Esophagus muscularis mucosa (tissue), 4 donors: ENCODE measurements at regions of chr3 and their contacts with region 1.

Region 1: GRCh38 chr3:51622868-51623267 is 48.2 kb upstream of the TEX264 start:
- DNase-seq: no peak
- H3K4me3 ChIP-seq: no peak overlapping the region
- H3K27ac ChIP-seq: peak overlapping the region; percentile 70 to 78 (median 72)
- H3K4me1 ChIP-seq: peaks cover 31 to 55% (median 54%) of the 10 kb centered on the region in 4 donors
- H3K27me3 ChIP-seq: no peaks in the 10 kb centered on the region
- CTCF ChIP-seq: no peak
- EP300 ChIP-seq: no peak
- POLR2A ChIP-seq: no peak

Region 2: GRCh38 chr3:51538459-51539290 is 84.2 kb before region 1 on chr3 and contains the start of gene RAD54L2:
- intact Hi-C with region 1: loop called (anchors 10 kb)
- DNase-seq: no peak
- H3K4me3 ChIP-seq: peak within 1 kb of the TSS; percentile 78 to 99 (median 97)
- H3K27ac ChIP-seq: peak within 1 kb of the TSS; percentile 89 to 96 (median 94)
- H3K4me1 ChIP-seq: peaks cover 21 to 39% (median 35%) of the 10 kb centered on the region in 4 donors
- H3K27me3 ChIP-seq: no peaks in the 10 kb centered on the region
- CTCF ChIP-seq: peak; percentile 37 to 56 (median 41)
- EP300 ChIP-seq: no peak
- POLR2A ChIP-seq: no peak
- total RNA-seq, gene RAD54L2: 18.2 to 25.3 (median 23.8) TPM